Caco-2 (cell line): ENCODE measurements at regions of chr15 and their contacts with region 1.

Region 1: GRCh38 chr15:40344631-40345120 is 3.9 kb upstream of the CCDC9B start:
- DNase-seq: peak; percentile 68 to 79
- H3K4me3 ChIP-seq: no peak overlapping the region
- H3K4me3 Mint-ChIP-seq: no peak overlapping the region
- H3K27ac Mint-ChIP-seq: no peak overlapping the region
- H3K4me1 ChIP-seq: peaks cover 51% of the 10 kb centered on the region
- H3K4me1 Mint-ChIP-seq: peaks cover 34% of the 10 kb centered on the region
- H3K27me3 ChIP-seq: no peaks in the 10 kb centered on the region
- H3K27me3 Mint-ChIP-seq: no peaks in the 10 kb centered on the region
- CTCF ChIP-seq: peak; percentile 71 to 78

Region 2: DNA sequence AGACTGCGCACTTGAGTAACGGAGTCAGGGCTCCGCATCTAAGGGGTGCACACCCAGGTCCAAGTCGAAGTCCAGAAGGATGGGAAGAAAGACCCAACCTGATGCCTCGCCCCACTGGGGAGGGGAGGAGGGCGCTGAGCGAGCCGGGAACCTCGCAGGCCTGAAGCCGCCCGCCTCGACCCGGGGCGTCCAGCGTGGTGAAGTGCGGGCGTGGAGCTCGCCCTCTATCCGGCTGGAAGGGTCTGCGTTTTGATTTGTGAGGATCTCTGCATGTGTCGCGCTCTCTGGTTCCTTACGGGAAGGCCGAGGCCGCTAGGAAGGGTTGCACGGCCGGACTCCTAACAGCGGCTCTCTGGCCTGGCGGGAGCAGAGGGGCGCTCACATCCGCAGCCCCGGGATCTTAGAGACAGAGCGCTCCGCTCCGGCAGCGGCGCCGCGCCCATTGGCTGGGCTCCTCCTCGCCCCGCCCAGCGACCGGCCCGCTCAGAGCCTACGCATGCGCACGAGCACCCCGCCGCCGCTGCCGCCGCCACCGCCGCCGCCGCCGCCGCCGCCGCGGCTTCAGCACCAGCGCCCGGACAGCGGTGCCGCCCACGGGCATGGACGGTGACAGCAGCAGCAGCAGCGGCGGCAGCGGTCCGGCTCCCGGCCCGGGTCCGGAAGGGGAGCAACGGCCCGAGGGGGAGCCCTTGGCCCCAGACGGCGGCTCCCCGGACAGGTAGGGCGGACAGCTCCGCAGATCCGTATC is 13.2 kb after region 1 on chr15 and contains the start of gene DISP2:
- CTCF ChIA-PET with region 1: interaction called, 4 read pairs
- POLR2A ChIA-PET with region 1: interaction called, 8 read pairs
- intact Hi-C with region 1: loop called (anchors 1 kb)
- DNase-seq: peak; percentile 86 to 95
- H3K4me3 ChIP-seq: peak within 1 kb of the TSS; percentile 64
- H3K4me3 Mint-ChIP-seq: peak within 1 kb of the TSS; percentile 88
- H3K27ac Mint-ChIP-seq: no peak within 1 kb of the TSS
- H3K4me1 ChIP-seq: peaks cover 31% of the 10 kb centered on the region
- H3K4me1 Mint-ChIP-seq: peaks cover 43% of the 10 kb centered on the region
- H3K27me3 ChIP-seq: no peaks in the 10 kb centered on the region
- H3K27me3 Mint-ChIP-seq: no peaks in the 10 kb centered on the region
- CTCF ChIP-seq: no peak
- total RNA-seq, gene DISP2: 4.6 and 6.3 TPM in 2 replicates

Region 3: GRCh38 chr15:40382580-40383456 is 38.1 kb after region 1 on chr15 and contains the start of gene KNSTRN:
- CTCF ChIA-PET with region 1: interaction called, 4 read pairs
- POLR2A ChIA-PET with region 1: no interaction called
- intact Hi-C with region 1: loop called (anchors 1 kb)
- DNase-seq: peak; percentile 92 to 93
- H3K4me3 ChIP-seq: peak within 1 kb of the TSS; percentile 61
- H3K4me3 Mint-ChIP-seq: peak within 1 kb of the TSS; percentile 97
- H3K27ac Mint-ChIP-seq: peak within 1 kb of the TSS; percentile 83
- H3K4me1 ChIP-seq: peaks cover 5% of the 10 kb centered on the region
- H3K4me1 Mint-ChIP-seq: no peaks in the 10 kb centered on the region
- H3K27me3 ChIP-seq: no peaks in the 10 kb centered on the region
- H3K27me3 Mint-ChIP-seq: no peaks in the 10 kb centered on the region
- CTCF ChIP-seq: no peak
- total RNA-seq, gene KNSTRN: 67.5 and 74.7 TPM in 2 replicates

Region 4: GRCh38 chr15:40405501-40406381 is 61.1 kb after region 1 on chr15 and contains the start of gene IVD:
- CTCF ChIA-PET with region 1: interaction called, 5 read pairs
- POLR2A ChIA-PET with region 1: no interaction called
- intact Hi-C with region 1: loop called (anchors 10 kb)
- DNase-seq: peak; percentile 93 to 95
- H3K4me3 ChIP-seq: peak within 1 kb of the TSS; percentile 65
- H3K4me3 Mint-ChIP-seq: peak within 1 kb of the TSS; percentile 82
- H3K27ac Mint-ChIP-seq: peak within 1 kb of the TSS; percentile 72
- H3K4me1 ChIP-seq: 0 out of 2 replicates have a peak, but pooled peaks cover 10% of the 10 kb centered on the region
- H3K4me1 Mint-ChIP-seq: no peaks in the 10 kb centered on the region
- H3K27me3 ChIP-seq: no peaks in the 10 kb centered on the region
- H3K27me3 Mint-ChIP-seq: no peaks in the 10 kb centered on the region
- CTCF ChIP-seq: no peak
- total RNA-seq, gene IVD: 74.5 and 76.6 TPM in 2 replicates

Region 5: DNA sequence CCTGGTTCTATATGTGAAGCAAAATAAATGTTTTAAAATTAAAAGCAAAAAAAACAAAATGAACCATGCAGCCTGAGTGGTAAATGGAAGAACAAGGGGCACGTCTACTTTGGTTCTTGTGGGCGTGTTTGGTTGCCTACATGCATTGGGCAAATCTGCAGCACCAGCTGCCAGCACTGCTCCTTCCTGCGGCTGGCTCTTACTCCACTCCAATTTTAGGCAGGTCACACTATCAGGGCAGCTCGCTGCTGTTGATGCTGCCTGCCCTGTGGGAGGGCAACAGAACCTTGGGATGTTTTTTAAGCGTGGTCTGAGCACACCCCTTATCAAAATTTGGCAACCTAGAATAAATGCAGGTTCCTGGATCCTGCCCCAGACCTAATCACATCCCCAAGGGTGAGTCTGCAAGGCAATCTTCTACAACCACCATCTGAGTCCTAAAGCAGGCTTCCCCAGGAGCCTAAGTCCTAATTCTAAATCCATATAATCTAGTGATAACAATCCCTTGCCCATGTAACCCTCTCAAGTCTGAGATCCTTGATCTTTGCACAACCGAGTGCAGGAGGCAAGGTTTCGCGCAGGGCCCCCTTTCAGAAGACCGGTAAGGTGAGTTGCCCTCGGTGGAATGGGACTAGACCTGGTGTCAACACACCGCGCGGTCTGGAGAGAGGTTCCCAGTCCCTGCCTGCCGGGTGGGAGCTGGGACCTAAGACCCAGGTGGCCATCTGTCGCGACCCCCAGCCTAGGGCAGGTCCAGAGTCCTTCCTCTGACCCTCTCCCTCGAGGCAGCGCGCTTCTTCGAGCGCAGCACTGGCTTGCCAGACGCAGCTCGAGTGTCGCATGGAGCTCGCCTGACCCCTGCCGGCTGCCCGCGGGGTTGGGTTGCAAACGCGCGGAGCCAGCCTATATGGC is 76.8 kb after region 1 on chr15:
- CTCF ChIA-PET with region 1: interaction called, 31 read pairs
- POLR2A ChIA-PET with region 1: no interaction called
- intact Hi-C with region 1: loop called (anchors 1 kb)
- DNase-seq: peak; percentile 79 to 87
- H3K4me3 ChIP-seq: peak overlapping the region; percentile 35
- H3K4me3 Mint-ChIP-seq: peak overlapping the region; percentile 9
- H3K27ac Mint-ChIP-seq: no peak overlapping the region
- H3K4me1 ChIP-seq: peaks cover 5% of the 10 kb centered on the region; the same call in 1 of the 2 replicates
- H3K4me1 Mint-ChIP-seq: no peaks in the 10 kb centered on the region
- H3K27me3 ChIP-seq: no peaks in the 10 kb centered on the region
- H3K27me3 Mint-ChIP-seq: no peaks in the 10 kb centered on the region
- CTCF ChIP-seq: peak; percentile 95 to 96

Region 6: GRCh38 chr15:40506964-40507571 is 162.4 kb after region 1 on chr15:
- CTCF ChIA-PET with region 1: no interaction called
- POLR2A ChIA-PET with region 1: no interaction called
- intact Hi-C with region 1: loop called (anchors 10 kb)
- DNase-seq: peak; percentile 77 to 85
- H3K4me3 ChIP-seq: no peak overlapping the region
- H3K4me3 Mint-ChIP-seq: peak overlapping the region; percentile 40
- H3K27ac Mint-ChIP-seq: no peak overlapping the region
- H3K4me1 ChIP-seq: 0 out of 2 replicates have a peak, but pooled peaks cover 6% of the 10 kb centered on the region
- H3K4me1 Mint-ChIP-seq: peaks cover 14% of the 10 kb centered on the region
- H3K27me3 ChIP-seq: no peaks in the 10 kb centered on the region; the same call in 1 of the 2 replicates
- H3K27me3 Mint-ChIP-seq: peaks cover 7% of the 10 kb centered on the region
- CTCF ChIP-seq: peak; percentile 56 to 83